Activated CD4-positive, alpha-beta memory T cell treated with anti-CD3 and anti-CD28 coated beads for 36 hours (primary cell): ENCODE measurements at regions of chr17 and their contacts with region 1.

Region 1: GRCh38 chr17:32909787-32910369 is 18.1 kb upstream of the TMEM98 start:
- DNase-seq: peak; percentile 79
- H3K4me3 Mint-ChIP-seq: no peak overlapping the region
- H3K27ac Mint-ChIP-seq: no peak overlapping the region
- H3K4me1 Mint-ChIP-seq: peaks cover 20% of the 10 kb centered on the region
- H3K27me3 Mint-ChIP-seq: peaks cover 20% of the 10 kb centered on the region

Region 2: DNA sequence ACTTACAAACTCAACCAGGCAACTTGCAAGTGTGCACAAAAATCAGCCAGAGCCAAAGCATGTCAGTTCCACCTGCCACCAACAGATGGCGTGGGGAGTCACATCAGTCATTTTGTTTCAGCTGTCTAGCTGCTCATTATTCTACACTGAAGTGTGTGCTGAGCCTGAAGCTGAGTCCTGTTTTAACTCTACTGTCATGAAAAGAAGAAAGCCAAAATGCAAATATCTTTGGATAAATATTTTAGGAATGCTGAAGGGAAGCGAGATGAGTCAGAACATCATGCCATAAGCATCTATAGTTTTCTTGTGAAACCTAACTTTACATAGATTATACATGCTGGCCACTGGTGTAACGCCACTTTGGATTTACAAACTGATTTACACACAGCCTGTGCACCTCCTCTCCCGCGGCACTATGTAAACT is 250.4 kb before region 1 on chr17:
- CTCF ChIA-PET with region 1: no interaction called
- POLR2A ChIA-PET with region 1: no interaction called
- intact Hi-C with region 1: loop called (anchors 10 kb)
- DNase-seq: peak; percentile 80
- H3K4me3 Mint-ChIP-seq: no peak overlapping the region
- H3K27ac Mint-ChIP-seq: no peak overlapping the region
- H3K4me1 Mint-ChIP-seq: no peaks in the 10 kb centered on the region
- H3K27me3 Mint-ChIP-seq: no peaks in the 10 kb centered on the region

Region 3: GRCh38 chr17:32869345-32870026 is 40.4 kb before region 1 on chr17:
- CTCF ChIA-PET with region 1: no interaction called
- POLR2A ChIA-PET with region 1: no interaction called
- intact Hi-C with region 1: no loop called
- DNase-seq: no peak
- H3K4me3 Mint-ChIP-seq: no peak overlapping the region
- H3K27ac Mint-ChIP-seq: no peak overlapping the region
- H3K4me1 Mint-ChIP-seq: no peaks in the 10 kb centered on the region
- H3K27me3 Mint-ChIP-seq: no peaks in the 10 kb centered on the region

Region 4: GRCh38 chr17:32936894-32937500 is 27.1 kb after region 1 on chr17:
- CTCF ChIA-PET with region 1: interaction called, 21 read pairs
- POLR2A ChIA-PET with region 1: no interaction called
- intact Hi-C with region 1: no loop called
- DNase-seq: peak; percentile 74
- H3K4me3 Mint-ChIP-seq: no peak overlapping the region
- H3K27ac Mint-ChIP-seq: no peak overlapping the region
- H3K4me1 Mint-ChIP-seq: peaks cover 6% of the 10 kb centered on the region
- H3K27me3 Mint-ChIP-seq: peaks cover 27% of the 10 kb centered on the region

Region 5: GRCh38 chr17:32971171-32971570 is 61.3 kb after region 1 on chr17:
- CTCF ChIA-PET with region 1: no interaction called
- POLR2A ChIA-PET with region 1: no interaction called
- intact Hi-C with region 1: loop called (anchors 5 kb)
- DNase-seq: peak; percentile 55
- H3K4me3 Mint-ChIP-seq: no peak overlapping the region
- H3K27ac Mint-ChIP-seq: no peak overlapping the region
- H3K4me1 Mint-ChIP-seq: peaks cover 16% of the 10 kb centered on the region
- H3K27me3 Mint-ChIP-seq: peaks cover 2% of the 10 kb centered on the region